GM18951 (cell line): ENCODE measurements at regions of chrX and their contacts with region 1.

Region 1: GRCh38 chrX:68196939-68197791 is 236.1 kb downstream of the OPHN1 start:
- POLR2A ChIP-seq: no peak

Region 2: GRCh38 chrX:68462653-68463052 is 265.5 kb after region 1 on chrX:
- in situ Hi-C with region 1: loop called (anchors 10 kb)
- POLR2A ChIP-seq: no peak

Region 3: GRCh38 chrX:68498508-68499379 is 301.6 kb after region 1 on chrX and contains the start of gene YIPF6:
- in situ Hi-C with region 1: no loop called
- POLR2A ChIP-seq: peak; percentile 95